A549 (cell line): ENCODE measurements at regions of chr1 and their contacts with region 1.

Region 1: DNA sequence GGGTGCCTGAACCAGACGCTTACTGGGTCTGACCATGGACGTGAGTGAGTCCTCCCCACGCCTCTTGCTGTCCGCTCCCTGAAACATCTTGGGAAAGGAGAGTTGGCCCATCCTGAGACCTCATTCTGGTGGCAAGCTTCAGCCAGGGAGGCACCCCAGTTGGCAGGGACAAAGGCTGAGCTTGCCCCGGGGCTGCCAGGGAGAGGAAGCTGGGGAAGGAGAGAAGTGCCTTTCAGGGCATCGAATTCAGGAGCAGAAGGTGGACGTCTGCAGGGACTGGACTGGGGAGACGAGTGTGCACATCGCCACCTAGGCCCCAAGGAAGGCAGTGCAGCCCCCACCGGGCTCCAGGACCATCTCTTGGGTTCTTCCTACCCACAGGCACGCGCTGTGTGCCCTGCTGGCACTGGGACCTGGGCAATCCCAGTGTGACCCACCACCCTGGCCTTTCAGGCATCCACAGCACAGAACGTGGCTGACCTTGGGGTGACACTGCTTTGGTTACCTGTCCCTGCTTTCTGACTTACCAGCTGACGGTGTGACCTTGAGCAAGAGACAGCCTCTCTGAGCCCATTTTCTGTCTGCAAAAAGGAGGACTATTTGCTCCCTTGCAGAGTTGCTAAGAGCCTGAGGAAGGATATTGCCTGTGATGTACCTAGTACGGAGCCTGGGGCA is 133.0 kb upstream of the WNT4 start:
- DNase-seq: peak; percentile 63 to 67
- ATAC-seq: peak; percentile 87 to 99
- H3K4me3 ChIP-seq: no peak overlapping the region
- H3K27ac ChIP-seq: no peak overlapping the region
- H3K4me1 ChIP-seq: no peaks in the 10 kb centered on the region
- CTCF ChIP-seq: peak; percentile 63
- EP300 ChIP-seq: no peak
- POLR2A ChIP-seq: no peak
- RAD21 ChIP-seq: peak; percentile 71 to 74

Region 2: DNA sequence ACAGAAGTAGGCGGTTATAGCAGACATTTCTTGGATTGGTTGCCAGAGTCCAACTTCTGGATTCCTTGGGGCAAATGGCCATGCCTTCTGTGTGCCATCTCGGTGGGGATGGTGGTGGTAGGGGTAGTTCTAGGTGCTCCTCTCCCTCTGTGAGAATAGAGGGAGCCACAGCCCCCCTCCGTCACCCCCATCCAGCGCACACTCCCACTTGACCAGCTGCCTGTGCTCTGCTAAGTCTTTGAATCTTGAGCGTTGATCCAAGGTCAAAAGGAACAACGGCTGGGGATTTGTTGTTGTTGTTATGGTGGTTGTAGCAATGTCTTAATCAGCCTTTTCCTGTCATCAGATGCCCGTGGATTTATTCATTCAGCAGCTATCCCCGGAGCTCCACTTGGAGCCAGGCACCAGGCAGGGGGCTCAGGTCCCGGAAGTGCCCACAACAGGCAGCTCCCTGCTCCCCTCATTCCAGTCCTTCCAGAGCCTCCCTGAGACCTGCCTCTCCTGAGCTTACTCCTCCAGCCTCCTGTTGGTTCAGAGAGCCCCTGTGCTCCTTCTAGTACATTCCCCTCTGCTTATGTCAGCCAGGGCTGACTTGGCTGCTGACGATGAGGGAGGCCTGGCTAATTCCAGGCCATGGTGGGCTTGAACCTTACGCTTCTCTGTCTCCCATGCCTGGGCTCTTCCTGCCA is 13.6 kb after region 1 on chr1:
- CTCF ChIA-PET with region 1: interaction called, 15 read pairs
- POLR2A ChIA-PET with region 1: no interaction called
- DNase-seq: no peak
- ATAC-seq: no peak
- H3K4me3 ChIP-seq: no peak overlapping the region
- H3K27ac ChIP-seq: no peak overlapping the region
- H3K4me1 ChIP-seq: no peaks in the 10 kb centered on the region
- CTCF ChIP-seq: no peak
- EP300 ChIP-seq: no peak
- POLR2A ChIP-seq: no peak
- RAD21 ChIP-seq: no peak

Region 3: DNA sequence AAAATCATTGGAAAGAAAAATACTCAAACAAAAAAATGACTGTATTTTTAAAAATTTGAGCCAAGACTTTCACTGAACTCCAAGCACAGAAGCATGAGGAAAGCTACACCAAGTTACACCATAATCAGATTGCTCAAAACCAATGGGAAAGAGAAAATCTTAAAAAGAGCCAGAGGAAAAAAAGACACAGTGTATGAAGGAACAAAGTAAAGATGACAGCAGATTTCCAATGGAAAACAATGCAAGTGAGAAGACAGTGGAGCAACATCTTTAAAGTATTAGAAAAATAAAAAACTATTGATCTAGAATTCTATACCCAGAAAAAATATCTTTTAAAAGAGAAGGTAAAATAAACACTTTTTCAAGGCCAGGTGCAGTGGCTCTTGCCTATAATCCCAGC is 28.0 kb after region 1 on chr1:
- CTCF ChIA-PET with region 1: no interaction called
- POLR2A ChIA-PET with region 1: no interaction called
- DNase-seq: no peak
- ATAC-seq: no peak
- H3K4me3 ChIP-seq: no peak overlapping the region
- H3K27ac ChIP-seq: no peak overlapping the region
- H3K4me1 ChIP-seq: no peaks in the 10 kb centered on the region
- CTCF ChIP-seq: no peak
- EP300 ChIP-seq: no peak
- POLR2A ChIP-seq: no peak
- RAD21 ChIP-seq: no peak

Region 4: DNA sequence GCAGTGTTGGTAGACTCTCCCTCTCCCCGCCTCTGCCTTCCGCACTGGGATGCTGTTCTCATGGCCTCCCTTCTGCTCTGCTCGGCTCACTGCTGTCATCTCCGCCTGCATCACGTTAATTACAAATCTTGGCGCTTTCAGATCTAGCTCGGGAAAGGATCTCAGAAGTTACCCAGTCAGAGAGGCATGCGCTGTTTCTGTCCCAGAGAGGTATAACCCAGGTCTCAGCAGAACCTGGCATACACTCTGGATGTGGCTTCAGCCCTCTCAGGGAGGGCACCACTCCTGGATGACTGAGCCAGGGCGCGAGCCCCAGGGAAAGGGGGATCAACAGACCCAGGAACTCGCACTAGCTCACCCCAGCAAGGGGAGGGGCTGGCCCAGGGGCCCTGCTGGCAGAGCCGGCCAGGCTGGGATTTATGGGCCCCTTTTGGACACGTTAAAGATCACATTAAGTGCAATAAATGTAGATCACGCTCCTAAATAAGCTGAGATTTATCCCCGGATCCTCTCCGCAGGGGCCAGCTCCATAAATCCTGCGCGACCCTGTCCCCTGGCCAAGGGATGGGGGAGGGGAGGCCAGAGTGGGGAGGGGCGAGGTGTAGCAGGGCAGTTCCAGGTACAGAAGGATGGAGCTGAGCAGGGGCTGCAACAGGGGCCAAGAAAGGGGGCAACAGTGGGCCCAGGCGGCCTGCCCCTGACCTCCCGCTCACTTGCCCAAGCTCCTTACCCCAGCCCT is 74.5 kb after region 1 on chr1:
- CTCF ChIA-PET with region 1: no interaction called
- POLR2A ChIA-PET with region 1: no interaction called
- DNase-seq: no peak
- ATAC-seq: peak in 1 of 2 experiments; percentile 21; a peak in 1 of 6 replicates
- H3K4me3 ChIP-seq: no peak overlapping the region
- H3K27ac ChIP-seq: no peak overlapping the region; a peak in 1 of 6 replicates
- H3K4me1 ChIP-seq: peaks cover 23% of the 10 kb centered on the region
- CTCF ChIP-seq: no peak
- EP300 ChIP-seq: no peak
- POLR2A ChIP-seq: no peak
- RAD21 ChIP-seq: no peak

Region 5: GRCh38 chr1:22376976-22377375 is 101.1 kb after region 1 on chr1:
- CTCF ChIA-PET with region 1: no interaction called
- POLR2A ChIA-PET with region 1: no interaction called
- DNase-seq: no peak
- ATAC-seq: 0 out of 6 replicates have a peak, but pooled peaks of 1 of the 2 experiments have one; percentile 33
- H3K4me3 ChIP-seq: no peak overlapping the region
- H3K27ac ChIP-seq: no peak overlapping the region
- H3K4me1 ChIP-seq: no peaks in the 10 kb centered on the region; the same call in 2 of the 3 replicates
- CTCF ChIP-seq: no peak
- EP300 ChIP-seq: no peak
- POLR2A ChIP-seq: no peak
- RAD21 ChIP-seq: no peak